ENCODE measurements at regions of chr5 and their contacts with region 1.

Region 1: GRCh38 chr5:1948663-1949652 is 66.2 kb upstream of the IRX4 start:
- DNase-seq: peak; percentile 70 to 90 (median 78)
- ATAC-seq: peak; percentile 86 to 92 (median 90)
- H3K4me3 ChIP-seq: peak overlapping the region in 6 of 12 donors; percentile 5 to 21 (median 14)
- H3K27ac ChIP-seq: peak overlapping the region in 10 of 12 donors; percentile 23 to 93 (median 60)
- H3K4me1 ChIP-seq: peaks cover 0 to 36% (median 18%) of the 10 kb centered on the region in 12 donors
- H3K27me3 ChIP-seq: peaks cover 0 to 3% (median 0%) of the 10 kb centered on the region in 9 donors
- CTCF ChIP-seq: no peak
- POLR2A ChIP-seq: no peak

Region 2: GRCh38 chr5:1344975-1345838 is 603.8 kb before region 1 on chr5 and contains the start of gene CLPTM1L:
- intact Hi-C with region 1: no loop called
- DNase-seq: peak; percentile 86 to 93 (median 89)
- ATAC-seq: peak; percentile 83 to 98 (median 96)
- H3K4me3 ChIP-seq: peak within 1 kb of the TSS; percentile 78 to 100 (median 94)
- H3K27ac ChIP-seq: peak within 1 kb of the TSS; percentile 54 to 94 (median 91)
- H3K4me1 ChIP-seq: peaks cover 0 to 25% (median 20%) of the 10 kb centered on the region in 12 donors
- H3K27me3 ChIP-seq: no peaks in the 10 kb centered on the region
- CTCF ChIP-seq: no peak
- POLR2A ChIP-seq: peak; percentile 50 to 88
- total RNA-seq, gene CLPTM1L: 31.0 to 60.2 (median 39.4) TPM

Region 3: GRCh38 chr5:1910081-1910760 is 38.7 kb before region 1 on chr5:
- intact Hi-C with region 1: no loop called
- DNase-seq: peak in 1 of 5 donors; percentile 58
- ATAC-seq: no peak
- H3K4me3 ChIP-seq: no peak overlapping the region
- H3K27ac ChIP-seq: no peak overlapping the region
- H3K4me1 ChIP-seq: no peaks in the 10 kb centered on the region
- H3K27me3 ChIP-seq: no peaks in the 10 kb centered on the region
- CTCF ChIP-seq: no peak
- POLR2A ChIP-seq: no peak

Region 4: DNA sequence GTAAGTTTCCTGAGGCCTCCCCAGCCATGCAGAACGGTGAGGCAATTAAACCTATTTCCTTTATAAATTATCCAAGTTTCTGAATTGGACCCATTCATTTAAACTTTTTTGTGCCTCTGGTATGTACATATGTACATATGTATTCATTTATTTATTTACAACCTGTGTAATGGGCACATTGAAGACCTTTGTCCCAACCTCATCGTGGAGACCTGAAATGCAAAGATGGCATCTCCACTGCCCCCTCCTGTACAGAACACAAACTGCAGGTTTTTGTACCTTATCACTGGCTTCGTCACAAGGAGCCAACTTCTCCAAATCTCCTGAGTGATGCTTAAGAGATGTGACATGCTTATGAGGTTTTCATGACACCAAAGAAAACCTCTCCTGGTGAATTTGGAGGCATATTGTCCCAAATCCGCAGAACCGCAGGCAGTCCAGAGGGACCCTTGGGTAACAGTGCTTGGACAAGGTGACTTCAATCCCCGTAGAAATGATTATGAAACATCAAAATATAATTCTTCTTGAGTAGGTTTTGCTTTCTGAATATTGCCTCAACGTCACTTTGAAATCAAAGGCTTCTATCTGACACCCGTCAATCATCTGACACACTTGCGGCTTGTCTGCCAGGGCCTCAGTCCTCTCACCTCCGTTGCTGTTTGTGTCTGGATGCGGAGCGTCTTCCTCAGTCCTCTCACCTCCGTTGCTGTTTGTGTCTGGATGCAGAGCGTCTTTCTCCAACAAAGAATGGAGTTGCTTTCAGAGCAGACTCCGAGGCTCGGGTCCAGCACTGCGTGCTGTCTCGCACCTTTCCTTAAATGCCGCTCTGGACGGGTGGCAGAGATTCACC is 68.8 kb after region 1 on chr5:
- intact Hi-C with region 1: loop called in 2 of 10 experiments (anchors 5 kb)
- DNase-seq: no peak
- ATAC-seq: no peak
- H3K4me3 ChIP-seq: no peak overlapping the region
- H3K27ac ChIP-seq: no peak overlapping the region
- H3K4me1 ChIP-seq: peaks cover 0 to 7% (median 0%) of the 10 kb centered on the region in 12 donors
- H3K27me3 ChIP-seq: peaks cover 0 to 4% (median 0%) of the 10 kb centered on the region in 9 donors
- CTCF ChIP-seq: peak in 8 of 12 donors; percentile 12 to 43 (median 26)
- POLR2A ChIP-seq: no peak

Measured in heart left ventricle (tissue), 16 donors.